ENCODE measurements at regions of chr15 and their contacts with region 1.

Region 1: DNA sequence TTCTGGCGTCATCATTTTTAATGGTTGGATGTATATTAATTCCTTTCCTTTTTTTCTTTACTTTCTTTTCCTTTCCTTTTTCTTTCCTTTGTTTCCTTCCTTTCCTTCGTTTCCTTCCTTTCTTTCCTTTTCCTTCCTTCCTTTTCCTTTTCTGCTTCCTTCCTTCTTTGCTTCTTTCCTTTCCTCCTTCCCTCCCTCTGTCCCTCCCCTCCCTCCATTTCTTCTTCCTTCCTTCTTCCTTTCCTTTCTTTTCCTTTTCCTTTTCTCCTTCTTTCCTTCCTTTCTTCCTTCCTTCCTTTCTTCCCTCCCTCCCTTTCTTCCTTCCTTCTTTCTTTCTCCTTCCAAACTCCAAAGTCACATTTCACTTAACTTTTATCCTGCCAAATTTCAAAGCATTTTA is 54.9 kb upstream of the LYSMD4 start:
- DNase-seq: no peak
- ATAC-seq: no peak
- H3K4me3 ChIP-seq: no peak overlapping the region
- H3K27ac ChIP-seq: no peak overlapping the region
- H3K4me1 ChIP-seq: no peaks in the 10 kb centered on the region
- H3K27me3 ChIP-seq: peaks cover 2% of the 10 kb centered on the region
- CTCF ChIP-seq: no peak

Region 2: DNA sequence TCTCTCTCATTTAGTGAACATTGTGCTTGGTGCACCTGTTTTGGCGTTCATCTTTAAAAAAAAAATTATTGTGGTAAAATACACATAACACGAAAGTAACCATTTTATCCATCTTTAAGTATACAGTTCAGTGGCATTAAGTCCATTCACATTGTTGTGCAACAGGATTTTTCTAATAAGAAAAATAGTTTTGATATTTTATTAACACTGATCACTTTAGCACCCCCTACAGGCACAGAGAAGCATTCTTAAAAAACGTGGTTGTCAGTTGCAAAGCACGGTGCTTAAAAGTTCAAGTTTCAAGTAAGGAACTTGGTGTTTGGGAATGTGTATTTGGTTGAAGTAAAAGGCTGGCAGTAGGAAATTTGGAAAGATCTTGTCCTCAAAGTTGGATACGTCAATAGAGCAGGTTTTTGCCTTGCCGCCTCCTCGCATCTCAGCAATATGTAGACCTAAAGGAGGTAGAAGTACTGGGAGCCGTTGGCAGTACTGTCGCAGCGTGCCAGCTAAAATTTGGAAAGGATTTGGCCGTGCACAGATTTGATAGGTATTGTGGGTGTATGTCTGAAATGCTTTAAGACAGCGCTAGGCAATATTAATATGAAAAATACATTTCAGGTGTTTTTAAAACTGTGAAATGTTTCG is 426.5 kb before region 1 on chr15:
- CTCF ChIA-PET with region 1: no interaction called
- POLR2A ChIA-PET with region 1: no interaction called
- in situ Hi-C with region 1: no loop called
- intact Hi-C with region 1: no loop called
- DNase-seq: no peak
- ATAC-seq: no peak
- H3K4me3 ChIP-seq: no peak overlapping the region
- H3K27ac ChIP-seq: no peak overlapping the region
- H3K4me1 ChIP-seq: no peaks in the 10 kb centered on the region
- H3K27me3 ChIP-seq: no peaks in the 10 kb centered on the region
- CTCF ChIP-seq: peak; percentile 75

Region 3: GRCh38 chr15:99749386-99749785 is 38.8 kb before region 1 on chr15:
- CTCF ChIA-PET with region 1: no interaction called
- POLR2A ChIA-PET with region 1: no interaction called
- in situ Hi-C with region 1: no loop called
- intact Hi-C with region 1: no loop called
- DNase-seq: no peak
- ATAC-seq: no peak
- H3K4me3 ChIP-seq: no peak overlapping the region
- H3K27ac ChIP-seq: no peak overlapping the region
- H3K4me1 ChIP-seq: no peaks in the 10 kb centered on the region
- H3K27me3 ChIP-seq: no peaks in the 10 kb centered on the region
- CTCF ChIP-seq: no peak

Region 4: DNA sequence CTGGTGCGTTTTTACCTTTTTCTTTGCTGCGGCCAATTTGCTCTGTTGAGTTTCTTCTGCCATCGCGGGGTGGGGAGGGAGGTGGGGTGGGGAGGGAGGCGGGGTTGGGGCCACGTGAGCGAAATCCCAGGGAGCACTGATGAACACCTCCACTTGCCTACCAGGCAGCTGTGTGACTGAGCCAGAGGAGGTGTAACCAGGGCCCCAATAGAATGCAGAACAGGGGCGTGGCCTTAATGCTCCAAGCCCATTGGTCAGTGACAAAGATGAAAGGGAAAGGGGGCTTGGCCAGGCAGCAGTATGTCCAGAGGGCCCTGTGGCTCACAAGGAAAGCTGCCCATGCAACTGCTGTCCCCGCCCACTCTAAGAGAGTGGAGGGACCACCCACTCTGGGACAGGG is 1993.7 kb after region 1 on chr15:
- CTCF ChIA-PET with region 1: no interaction called
- POLR2A ChIA-PET with region 1: no interaction called
- in situ Hi-C with region 1: no loop called
- intact Hi-C with region 1: loop called (anchors 10 kb)
- DNase-seq: no peak
- ATAC-seq: no peak
- H3K4me3 ChIP-seq: no peak overlapping the region
- H3K27ac ChIP-seq: no peak overlapping the region
- H3K4me1 ChIP-seq: no peaks in the 10 kb centered on the region
- H3K27me3 ChIP-seq: peaks cover 5% of the 10 kb centered on the region
- CTCF ChIP-seq: no peak